B cell (primary cell): ENCODE measurements at regions of chr6 and their contacts with region 1.

Region 1: GRCh38 chr6:29942275-29943052 is at the start of gene HLA-A:
- DNase-seq: peak; percentile 97
- ATAC-seq: peak; percentile 90
- H3K4me3 ChIP-seq: peak within 1 kb of the TSS; percentile 63 to 97 (median 90)
- H3K4me3 Mint-ChIP-seq: peak within 1 kb of the TSS; percentile 99
- H3K27ac ChIP-seq: peak within 1 kb of the TSS; percentile 100
- H3K27ac Mint-ChIP-seq: peak within 1 kb of the TSS; percentile 100
- H3K4me1 ChIP-seq: peaks cover 39 to 50% of the 10 kb centered on the region in 2 donors
- H3K4me1 Mint-ChIP-seq: peaks cover 62% of the 10 kb centered on the region
- H3K27me3 ChIP-seq: no peaks in the 10 kb centered on the region
- H3K27me3 Mint-ChIP-seq: no peaks in the 10 kb centered on the region
- CTCF ChIP-seq: no peak
- total RNA-seq, gene HLA-A: 1,591 and 1,607 TPM in 2 replicates

Region 2: GRCh38 chr6:29723262-29723665 is 219.2 kb before region 1 on chr6 and contains the start of gene HLA-F:
- CTCF ChIA-PET with region 1: no interaction called
- POLR2A ChIA-PET with region 1: no interaction called
- intact Hi-C with region 1: loop called (anchors 5 kb)
- DNase-seq: peak; percentile 96
- ATAC-seq: peak; percentile 91
- H3K4me3 ChIP-seq: peak within 1 kb of the TSS; percentile 75 to 100 (median 100)
- H3K4me3 Mint-ChIP-seq: peak within 1 kb of the TSS; percentile 96
- H3K27ac ChIP-seq: peak within 1 kb of the TSS; percentile 99 to 100
- H3K27ac Mint-ChIP-seq: peak within 1 kb of the TSS; percentile 98
- H3K4me1 ChIP-seq: peaks cover 29 to 43% of the 10 kb centered on the region in 2 donors
- H3K4me1 Mint-ChIP-seq: peaks cover 55% of the 10 kb centered on the region
- H3K27me3 ChIP-seq: no peaks in the 10 kb centered on the region
- H3K27me3 Mint-ChIP-seq: no peaks in the 10 kb centered on the region
- CTCF ChIP-seq: no peak
- total RNA-seq, gene HLA-F: 895 and 911 TPM in 2 replicates

Region 3: DNA sequence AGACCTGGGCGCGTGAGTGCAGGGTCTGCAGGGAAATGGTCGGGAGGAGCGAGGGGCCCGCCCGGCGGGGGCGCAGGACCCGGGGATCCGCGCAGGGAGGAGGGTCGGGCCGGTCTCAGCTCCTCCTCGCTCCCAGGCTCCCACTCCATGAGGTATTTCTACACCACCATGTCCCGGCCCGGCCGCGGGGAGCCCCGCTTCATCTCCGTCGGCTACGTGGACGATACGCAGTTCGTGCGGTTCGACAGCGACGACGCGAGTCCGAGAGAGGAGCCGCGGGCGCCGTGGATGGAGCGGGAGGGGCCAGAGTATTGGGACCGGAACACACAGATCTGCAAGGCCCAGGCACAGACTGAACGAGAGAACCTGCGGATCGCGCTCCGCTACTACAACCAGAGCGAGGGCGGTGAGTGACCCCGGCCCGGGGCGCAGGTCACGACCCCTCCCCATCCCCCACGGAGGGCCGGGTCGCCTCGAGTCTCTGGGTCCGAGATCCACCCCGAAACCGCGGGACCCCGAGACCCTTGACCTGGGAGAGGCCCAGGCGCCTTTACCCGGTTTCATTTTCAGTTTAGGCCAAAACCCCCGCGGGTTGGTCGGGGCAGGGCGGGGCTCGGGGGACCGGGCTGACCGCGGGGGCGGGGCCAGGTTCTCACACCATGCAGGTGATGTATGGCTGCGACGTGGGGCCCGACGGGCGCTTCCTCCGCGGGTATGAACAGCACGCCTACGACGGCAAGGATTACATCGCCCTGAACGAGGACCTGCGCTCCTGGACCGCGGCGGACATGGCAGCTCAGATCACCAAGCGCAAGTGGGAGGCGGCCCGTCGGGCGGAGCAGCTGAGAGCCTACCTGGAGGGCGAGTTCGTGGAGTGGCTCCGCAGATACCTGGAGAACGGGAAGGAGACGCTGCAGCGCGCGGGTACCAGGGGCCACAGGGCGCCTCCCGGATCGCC is 54.4 kb before region 1 on chr6:
- CTCF ChIA-PET with region 1: no interaction called
- POLR2A ChIA-PET with region 1: no interaction called
- intact Hi-C with region 1: loop called (anchors 1 kb)
- DNase-seq: peak; percentile 93
- ATAC-seq: peak; percentile 84
- H3K4me3 ChIP-seq: peak overlapping the region; percentile 31 to 93 (median 90)
- H3K4me3 Mint-ChIP-seq: peak overlapping the region; percentile 94
- H3K27ac ChIP-seq: peak overlapping the region; percentile 92 to 95
- H3K27ac Mint-ChIP-seq: peak overlapping the region; percentile 96
- H3K4me1 ChIP-seq: peaks cover 7 to 23% of the 10 kb centered on the region in 2 donors
- H3K4me1 Mint-ChIP-seq: peaks cover 11% of the 10 kb centered on the region
- H3K27me3 ChIP-seq: no peaks in the 10 kb centered on the region
- H3K27me3 Mint-ChIP-seq: no peaks in the 10 kb centered on the region
- CTCF ChIP-seq: no peak

Region 4: GRCh38 chr6:29926413-29927274 is 15.8 kb before region 1 on chr6:
- CTCF ChIA-PET with region 1: no interaction called
- POLR2A ChIA-PET with region 1: interaction called, 8 read pairs
- intact Hi-C with region 1: loop called (anchors 2 kb)
- DNase-seq: peak; percentile 89
- ATAC-seq: peak; percentile 84
- H3K4me3 ChIP-seq: peak overlapping the region; percentile 59 to 88 (median 74)
- H3K4me3 Mint-ChIP-seq: peak overlapping the region; percentile 93
- H3K27ac ChIP-seq: peak overlapping the region; percentile 91 to 93
- H3K27ac Mint-ChIP-seq: peak overlapping the region; percentile 95
- H3K4me1 ChIP-seq: peaks cover 4 to 17% of the 10 kb centered on the region in 2 donors
- H3K4me1 Mint-ChIP-seq: peaks cover 14% of the 10 kb centered on the region
- H3K27me3 ChIP-seq: no peaks in the 10 kb centered on the region
- H3K27me3 Mint-ChIP-seq: no peaks in the 10 kb centered on the region
- CTCF ChIP-seq: no peak

Region 5: GRCh38 chr6:29976588-29977424 is 34.3 kb after region 1 on chr6:
- CTCF ChIA-PET with region 1: interaction called, 3 read pairs
- POLR2A ChIA-PET with region 1: no interaction called
- intact Hi-C with region 1: loop called (anchors 5 kb)
- DNase-seq: peak; percentile 77
- ATAC-seq: peak; percentile 87
- H3K4me3 ChIP-seq: peak overlapping the region in 4 of 5 experiments; percentile 39 to 75 (median 57)
- H3K4me3 Mint-ChIP-seq: peak overlapping the region; percentile 92
- H3K27ac ChIP-seq: no peak overlapping the region
- H3K27ac Mint-ChIP-seq: no peak overlapping the region
- H3K4me1 ChIP-seq: peaks cover 25 to 26% of the 10 kb centered on the region in 2 donors
- H3K4me1 Mint-ChIP-seq: peaks cover 34% of the 10 kb centered on the region
- H3K27me3 ChIP-seq: peaks cover 0 to 44% (median 30%) of the 10 kb centered on the region in 4 experiments
- H3K27me3 Mint-ChIP-seq: peaks cover 48% of the 10 kb centered on the region
- CTCF ChIP-seq: no peak

Region 6: DNA sequence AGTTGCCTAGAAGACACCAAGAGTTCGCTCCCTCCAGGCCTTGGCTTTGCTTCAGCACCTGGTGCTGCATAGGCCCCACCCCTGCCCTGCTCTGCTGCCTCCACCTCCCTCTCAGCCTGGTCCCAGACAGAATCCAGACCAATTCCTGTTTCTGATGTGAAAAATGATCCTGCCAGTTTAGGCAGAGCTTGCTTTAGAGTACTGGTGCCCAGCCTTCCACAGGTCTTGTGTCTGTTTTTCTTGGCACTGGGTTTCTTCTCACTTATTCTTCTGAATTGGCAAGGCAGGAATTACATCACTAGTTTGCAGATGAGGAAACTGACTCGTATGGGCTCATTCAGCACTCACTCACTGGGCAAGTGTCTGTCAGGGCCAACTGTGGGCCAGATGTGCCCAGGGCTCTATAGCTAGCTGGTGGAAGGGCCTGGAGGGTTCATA is 52.9 kb after region 1 on chr6:
- CTCF ChIA-PET with region 1: no interaction called
- POLR2A ChIA-PET with region 1: no interaction called
- intact Hi-C with region 1: no loop called
- DNase-seq: no peak
- ATAC-seq: no peak
- H3K4me3 ChIP-seq: no peak overlapping the region
- H3K4me3 Mint-ChIP-seq: no peak overlapping the region
- H3K27ac ChIP-seq: no peak overlapping the region
- H3K27ac Mint-ChIP-seq: no peak overlapping the region
- H3K4me1 ChIP-seq: no peaks in the 10 kb centered on the region
- H3K4me1 Mint-ChIP-seq: no peaks in the 10 kb centered on the region
- H3K27me3 ChIP-seq: peaks cover 0 to 28% (median 0%) of the 10 kb centered on the region in 4 experiments
- H3K27me3 Mint-ChIP-seq: peaks cover 41% of the 10 kb centered on the region
- CTCF ChIP-seq: no peak

Region 7: GRCh38 chr6:30061092-30061857 is 118.8 kb after region 1 on chr6 and contains the start of gene POLR1H:
- CTCF ChIA-PET with region 1: interaction called, 3 read pairs
- POLR2A ChIA-PET with region 1: no interaction called
- intact Hi-C with region 1: loop called (anchors 5 kb)
- DNase-seq: peak; percentile 95
- ATAC-seq: peak; percentile 90
- H3K4me3 ChIP-seq: peak within 1 kb of the TSS; percentile 80 to 100 (median 92)
- H3K4me3 Mint-ChIP-seq: peak within 1 kb of the TSS; percentile 100
- H3K27ac ChIP-seq: peak within 1 kb of the TSS; percentile 95 to 97
- H3K27ac Mint-ChIP-seq: peak within 1 kb of the TSS; percentile 99
- H3K4me1 ChIP-seq: peaks cover 25 to 30% of the 10 kb centered on the region in 2 donors
- H3K4me1 Mint-ChIP-seq: peaks cover 41% of the 10 kb centered on the region
- H3K27me3 ChIP-seq: no peaks in the 10 kb centered on the region
- H3K27me3 Mint-ChIP-seq: no peaks in the 10 kb centered on the region
- CTCF ChIP-seq: no peak
- total RNA-seq, gene POLR1H: 38.8 and 39.7 TPM in 2 replicates

Region 8: DNA sequence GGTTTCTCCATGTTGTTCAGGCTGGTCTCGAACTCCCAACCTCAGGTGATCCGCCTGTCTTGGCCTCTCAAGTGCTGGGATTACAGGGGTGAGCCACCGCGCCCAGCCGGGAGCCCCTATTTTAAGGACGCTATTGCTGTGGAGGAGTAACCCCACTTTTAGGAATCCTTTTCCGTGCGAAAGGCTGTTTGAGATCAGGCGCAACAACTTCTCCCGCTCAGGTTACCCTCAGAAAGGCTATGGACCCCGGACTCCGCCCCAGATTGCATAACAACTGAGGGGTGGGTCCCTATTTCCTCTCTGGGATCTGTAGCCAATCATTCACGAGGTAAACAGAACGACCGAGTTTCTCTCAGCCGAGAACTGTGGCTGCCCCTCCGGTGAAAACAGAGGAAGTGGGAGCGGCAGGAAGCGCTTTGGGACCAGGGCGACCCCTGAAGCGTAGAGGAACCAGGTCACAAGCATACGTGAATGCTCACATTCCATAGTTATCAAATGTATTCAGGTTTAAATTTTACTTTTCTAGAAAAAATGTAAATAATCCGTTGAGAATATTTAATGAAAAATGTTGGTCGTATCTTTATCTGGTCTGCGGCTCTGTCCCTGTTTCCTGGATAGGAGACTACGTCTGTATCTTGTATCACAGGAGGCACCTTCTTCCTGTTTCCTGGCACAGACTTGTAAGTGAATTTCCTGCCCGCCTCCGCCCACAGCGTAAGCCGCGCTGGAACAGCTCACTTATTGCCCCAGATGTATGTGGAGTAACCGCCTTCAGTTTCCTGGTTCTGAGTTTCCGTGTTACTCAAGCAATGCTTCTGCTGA is 573.7 kb after region 1 on chr6:
- CTCF ChIA-PET with region 1: no interaction called
- POLR2A ChIA-PET with region 1: no interaction called
- intact Hi-C with region 1: no loop called
- DNase-seq: peak; percentile 95
- ATAC-seq: peak; percentile 85
- H3K4me3 ChIP-seq: peak overlapping the region; percentile 31 to 73 (median 58)
- H3K4me3 Mint-ChIP-seq: peak overlapping the region; percentile 90
- H3K27ac ChIP-seq: peak overlapping the region; percentile 88 to 99
- H3K27ac Mint-ChIP-seq: peak overlapping the region; percentile 99
- H3K4me1 ChIP-seq: peaks cover 34 to 66% of the 10 kb centered on the region in 2 donors
- H3K4me1 Mint-ChIP-seq: peaks cover 60% of the 10 kb centered on the region
- H3K27me3 ChIP-seq: no peaks in the 10 kb centered on the region
- H3K27me3 Mint-ChIP-seq: no peaks in the 10 kb centered on the region
- CTCF ChIP-seq: no peak